H1 (cell line): ENCODE measurements at regions of chr7 and their contacts with region 1.

Region 1: DNA sequence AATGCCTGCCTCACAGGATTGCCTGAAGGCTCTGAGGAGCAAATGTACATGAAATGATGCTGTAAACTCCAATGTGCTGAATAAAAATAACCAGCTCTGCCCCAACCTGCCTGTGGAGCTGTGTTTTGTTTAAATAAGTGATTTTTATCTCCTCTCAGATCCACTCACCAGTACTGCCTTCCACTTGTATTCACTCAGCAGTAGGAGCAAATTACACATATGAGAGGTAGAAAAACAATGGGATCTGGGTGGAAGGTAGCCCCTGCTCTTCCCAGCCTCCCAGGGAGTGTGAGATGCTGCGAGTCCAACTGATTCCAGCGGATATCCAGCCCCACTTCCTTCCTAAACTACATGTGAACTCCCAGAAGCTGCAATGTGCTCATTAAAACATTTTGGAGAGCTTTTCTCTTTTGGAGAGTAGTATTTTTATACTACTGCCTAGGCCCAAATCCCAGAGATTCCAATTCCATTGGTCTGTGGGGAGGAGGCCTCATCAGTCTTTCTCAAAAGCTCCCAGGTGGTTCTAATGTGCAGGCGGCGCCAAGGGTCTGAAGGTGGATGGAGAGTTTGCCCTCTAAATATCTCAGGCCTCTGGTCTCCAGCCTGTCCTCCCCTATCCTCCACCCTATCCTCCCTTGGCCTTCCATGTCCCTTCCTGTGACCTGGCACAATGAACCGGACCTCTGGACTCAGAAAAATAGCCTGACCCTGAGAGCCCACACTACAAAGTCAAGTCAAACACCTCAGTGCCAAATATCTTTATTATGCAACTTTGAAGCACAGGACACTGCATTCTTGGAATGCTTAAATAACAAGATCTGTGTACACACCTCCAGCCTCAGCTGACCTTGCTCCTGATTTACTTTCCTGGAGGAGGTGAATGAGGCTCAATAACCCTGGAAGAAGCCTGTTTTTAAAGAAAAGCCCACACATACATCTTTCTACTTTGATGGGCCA is 46.2 kb downstream of the CPVL start:
- DNase-seq: no peak
- H3K4me3 ChIP-seq: no peak overlapping the region
- H3K27ac ChIP-seq: no peak overlapping the region
- H3K4me1 ChIP-seq: no peaks in the 10 kb centered on the region
- H3K27me3 ChIP-seq: no peaks in the 10 kb centered on the region
- CTCF ChIP-seq: no peak
- EP300 ChIP-seq: no peak
- POLR2A ChIP-seq: no peak
- RAD21 ChIP-seq: no peak

Region 2: DNA sequence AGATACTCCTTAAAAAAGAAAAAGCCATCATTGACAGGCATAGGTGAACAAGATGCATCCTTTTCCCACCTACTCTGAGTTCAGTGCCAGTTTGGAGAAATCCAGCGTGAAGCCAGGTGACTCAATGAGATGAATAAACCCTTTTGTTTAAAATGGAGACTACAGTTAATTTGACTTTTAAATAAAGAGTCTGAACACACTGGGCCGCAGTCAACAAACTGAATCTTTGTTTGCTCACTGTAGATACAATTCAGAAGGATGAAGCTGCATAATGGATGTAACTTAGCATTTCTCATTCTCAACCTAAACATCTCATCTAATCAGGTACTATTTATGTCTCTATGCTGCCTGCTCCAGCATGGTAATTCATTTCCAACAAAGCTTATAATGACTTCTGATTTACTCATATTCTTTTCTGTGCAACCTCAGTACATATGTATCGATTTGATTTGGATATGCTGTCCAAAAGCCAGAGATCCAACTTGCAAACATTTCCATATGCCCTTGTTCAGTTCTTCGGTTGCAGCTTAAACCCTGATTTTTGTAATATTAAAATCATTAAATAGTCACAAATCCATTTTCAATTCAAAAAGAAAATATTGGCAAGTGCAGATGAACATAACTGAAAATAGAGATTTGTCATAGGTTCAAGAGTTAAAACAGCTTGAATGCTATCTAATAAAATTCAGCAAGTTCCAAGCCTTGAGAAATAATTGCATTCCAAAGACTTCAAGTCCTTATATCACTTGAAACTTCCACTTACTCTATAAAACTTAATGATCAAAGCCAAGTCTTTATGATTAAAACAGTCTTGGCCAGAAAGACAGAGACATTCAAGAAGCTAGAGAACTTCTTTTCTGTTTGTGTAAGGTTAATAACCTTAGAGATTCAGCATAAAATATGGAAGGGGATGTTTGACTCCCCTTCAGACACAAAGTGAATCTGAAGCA is 21.6 kb before region 1 on chr7:
- CTCF ChIA-PET with region 1: interaction called, 10 read pairs
- POLR2A ChIA-PET with region 1: interaction called, 3 read pairs
- DNase-seq: no peak
- H3K4me3 ChIP-seq: no peak overlapping the region
- H3K27ac ChIP-seq: no peak overlapping the region
- H3K4me1 ChIP-seq: no peaks in the 10 kb centered on the region
- H3K27me3 ChIP-seq: no peaks in the 10 kb centered on the region
- CTCF ChIP-seq: no peak
- EP300 ChIP-seq: no peak
- POLR2A ChIP-seq: no peak
- RAD21 ChIP-seq: no peak

Region 3: DNA sequence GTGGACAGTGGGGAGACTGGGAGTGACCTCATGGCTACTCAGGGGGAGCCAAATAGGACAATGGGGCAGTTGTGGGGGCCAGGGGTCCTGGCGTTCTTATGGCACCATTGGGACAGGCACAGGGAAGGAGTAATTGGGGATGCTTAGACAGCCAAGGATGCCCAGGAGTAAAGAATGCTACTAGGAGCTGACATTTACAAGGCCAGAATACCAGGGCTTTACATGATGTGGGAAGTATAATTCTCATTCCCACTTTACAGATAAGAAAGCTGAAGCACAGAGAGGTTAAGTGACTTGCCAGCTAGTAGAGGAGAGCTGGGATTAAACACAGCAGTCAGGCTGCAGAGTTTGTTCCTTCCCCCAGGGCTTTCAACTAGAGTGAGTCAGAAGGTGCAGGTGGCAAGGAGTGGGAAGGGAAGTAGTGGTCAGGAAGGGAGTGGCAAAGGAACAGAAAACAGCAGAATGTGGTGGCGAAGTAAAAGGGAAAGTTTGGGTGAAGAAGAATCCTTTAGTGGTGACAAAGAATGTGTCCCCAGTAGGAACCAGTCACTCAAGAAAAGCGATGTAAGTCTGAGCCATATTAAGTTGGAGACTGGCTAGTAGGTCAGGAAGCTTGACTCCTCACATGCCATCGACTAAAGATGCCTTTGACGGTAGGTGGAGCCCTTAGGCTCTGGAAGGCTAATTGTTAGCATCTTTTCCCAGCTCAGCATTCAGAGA is 13.4 kb after region 1 on chr7:
- CTCF ChIA-PET with region 1: interaction called, 35 read pairs
- POLR2A ChIA-PET with region 1: no interaction called
- DNase-seq: peak in 1 of 2 experiments; percentile 27
- H3K4me3 ChIP-seq: no peak overlapping the region
- H3K27ac ChIP-seq: no peak overlapping the region
- H3K4me1 ChIP-seq: peaks cover 2 to 3% (median 3%) of the 10 kb centered on the region in 4 experiments; a peak in 4 of 7 replicates
- H3K27me3 ChIP-seq: no peaks in the 10 kb centered on the region
- CTCF ChIP-seq: peak; percentile 21 to 76 (median 67)
- EP300 ChIP-seq: no peak
- POLR2A ChIP-seq: no peak
- RAD21 ChIP-seq: peak; percentile 80 to 83

Region 4: GRCh38 chr7:29255906-29256782 is 156.0 kb after region 1 on chr7:
- CTCF ChIA-PET with region 1: no interaction called
- POLR2A ChIA-PET with region 1: no interaction called
- DNase-seq: no peak
- H3K4me3 ChIP-seq: no peak overlapping the region
- H3K27ac ChIP-seq: no peak overlapping the region
- H3K4me1 ChIP-seq: 0 out of 7 replicates have a peak, but pooled peaks cover 0 to 2% (median 0%) of the 10 kb centered on the region in 4 experiments
- H3K27me3 ChIP-seq: no peaks in the 10 kb centered on the region
- CTCF ChIP-seq: no peak
- EP300 ChIP-seq: no peak
- POLR2A ChIP-seq: no peak
- RAD21 ChIP-seq: no peak